ENCODE measurements at regions of chr1 and their contacts with region 1.

Region 1: DNA sequence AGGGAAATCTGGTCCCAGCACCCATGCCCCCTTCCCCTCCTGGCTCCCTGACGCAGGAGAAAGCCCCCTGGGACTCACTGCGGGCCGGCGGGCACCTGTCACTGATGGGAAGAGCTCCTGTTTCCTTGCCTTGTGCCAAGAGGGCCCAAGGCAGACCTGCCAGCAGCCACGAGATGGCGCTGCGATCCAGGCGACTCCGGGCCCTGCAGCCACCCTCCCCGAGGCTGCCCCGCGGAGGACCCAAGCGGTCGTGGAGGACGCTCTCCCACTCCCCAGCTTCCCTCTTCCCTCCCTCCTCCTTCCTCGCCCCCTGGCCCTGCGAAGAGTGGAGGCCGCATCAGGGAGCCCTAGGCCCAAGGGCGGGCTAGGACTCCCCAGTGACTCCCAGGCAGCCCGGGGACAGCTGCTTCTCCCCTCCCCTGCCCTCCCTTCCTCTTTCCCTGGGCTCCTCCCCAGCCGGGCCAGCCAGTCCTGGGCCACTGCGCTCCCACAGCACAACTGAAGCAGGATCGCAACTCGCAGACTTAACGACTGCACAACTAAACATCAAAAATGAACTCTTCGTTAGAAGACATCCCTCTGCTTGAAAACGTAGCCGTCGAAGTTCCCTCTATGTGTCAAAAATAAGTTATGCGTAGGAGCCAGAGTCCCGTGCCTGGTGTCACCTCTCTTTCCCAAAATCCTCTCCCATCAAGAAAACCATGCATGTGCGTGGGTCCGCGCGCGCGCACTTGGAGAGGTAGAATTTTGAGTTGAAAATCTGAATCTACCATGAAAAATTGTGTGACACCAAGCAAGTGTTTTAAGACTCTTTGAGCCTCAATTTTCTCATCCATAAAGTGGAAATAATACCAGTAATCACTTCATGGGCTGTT is 34.2 kb downstream of the BATF3 start:
- DNase-seq: peak; percentile 87
- CTCF ChIP-seq: peak; percentile 99

Region 2: DNA sequence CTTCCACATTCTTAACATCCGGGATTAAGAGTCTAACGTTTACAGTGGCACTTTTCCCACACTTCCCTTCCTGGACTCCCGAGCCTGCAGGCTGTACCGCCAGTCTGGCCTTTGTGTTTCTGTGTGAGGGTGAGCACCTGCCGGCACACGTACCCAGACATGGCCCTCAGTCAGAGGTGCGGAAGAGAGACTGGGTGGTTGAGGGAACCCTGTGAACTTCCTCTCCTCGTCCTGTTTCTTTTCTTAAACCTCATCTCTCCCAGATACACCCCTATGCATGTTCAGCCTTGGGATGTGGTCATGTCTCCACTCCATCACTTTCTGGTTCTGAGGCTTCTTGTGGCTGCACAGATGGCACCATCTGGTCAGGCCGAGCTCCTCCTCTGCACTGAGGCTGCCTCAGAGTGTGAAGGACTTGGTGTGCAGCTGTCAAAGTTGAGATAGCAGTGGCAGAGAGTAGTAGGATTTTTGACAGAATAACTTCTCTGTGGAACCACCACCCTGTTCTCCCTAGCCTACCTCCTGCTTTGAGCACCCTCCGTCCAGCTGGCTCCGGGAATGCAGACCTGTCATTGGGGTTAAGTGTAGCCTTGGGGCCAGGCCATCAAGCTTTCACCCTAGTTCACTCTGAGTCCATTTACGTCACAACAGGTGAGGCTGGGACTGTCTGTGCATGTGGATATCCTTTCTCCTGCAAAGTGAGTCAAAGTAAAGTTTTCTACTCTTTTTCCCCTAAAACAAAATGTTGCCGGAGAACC is 316.3 kb after region 1 on chr1:
- in situ Hi-C with region 1: loop called (anchors 25 kb)
- DNase-seq: no peak
- CTCF ChIP-seq: no peak

Region 3: GRCh38 chr1:213744780-213745179 is 1079.3 kb after region 1 on chr1:
- in situ Hi-C with region 1: no loop called
- DNase-seq: no peak
- CTCF ChIP-seq: no peak